ENCODE measurements at regions of chr3 and their contacts with region 1.

Region 1: GRCh38 chr3:196357905-196358304 is 19.7 kb upstream of the TM4SF19 start:
- DNase-seq: no peak
- ATAC-seq: no peak
- H3K4me3 ChIP-seq: no peak overlapping the region
- H3K27ac ChIP-seq: no peak overlapping the region
- H3K4me1 ChIP-seq: no peaks in the 10 kb centered on the region
- H3K27me3 ChIP-seq: no peaks in the 10 kb centered on the region
- CTCF ChIP-seq: no peak

Region 2: GRCh38 chr3:195524171-195524896 is 833.6 kb before region 1 on chr3:
- intact Hi-C with region 1: no loop called
- DNase-seq: no peak
- ATAC-seq: peak in 2 of 8 donors; percentile 25 to 29
- H3K4me3 ChIP-seq: no peak overlapping the region
- H3K27ac ChIP-seq: peak overlapping the region in 4 of 10 donors; percentile 5 to 41 (median 16)
- H3K4me1 ChIP-seq: peaks cover 0 to 15% (median 5%) of the 10 kb centered on the region in 9 donors
- H3K27me3 ChIP-seq: no peaks in the 10 kb centered on the region
- CTCF ChIP-seq: no peak

Region 3: GRCh38 chr3:196274585-196274984 is 83.3 kb before region 1 on chr3:
- intact Hi-C with region 1: no loop called
- DNase-seq: no peak
- ATAC-seq: no peak
- H3K4me3 ChIP-seq: no peak overlapping the region
- H3K27ac ChIP-seq: peak overlapping the region in 2 of 10 donors; percentile 22 to 72
- H3K4me1 ChIP-seq: peaks cover 3 to 46% (median 32%) of the 10 kb centered on the region in 9 donors
- H3K27me3 ChIP-seq: no peaks in the 10 kb centered on the region
- CTCF ChIP-seq: no peak

Region 4: GRCh38 chr3:196335503-196335948 is 22.4 kb before region 1 on chr3:
- intact Hi-C with region 1: loop called in 1 of 10 experiments (anchors 1 kb)
- DNase-seq: no peak
- ATAC-seq: no peak
- H3K4me3 ChIP-seq: no peak overlapping the region
- H3K27ac ChIP-seq: no peak overlapping the region
- H3K4me1 ChIP-seq: peaks cover 0 to 12% (median 0%) of the 10 kb centered on the region in 9 donors
- H3K27me3 ChIP-seq: peaks cover 0 to 5% (median 0%) of the 10 kb centered on the region in 7 donors
- CTCF ChIP-seq: no peak

Measured in heart right ventricle (tissue), 16 donors.